Heart left ventricle (tissue), 16 donors: ENCODE measurements at regions of chr15 and their contacts with region 1.

Region 1: GRCh38 chr15:63522225-63522578 is 17.8 kb downstream of the USP3 start:
- DNase-seq: no peak
- ATAC-seq: peak; percentile 9 to 48 (median 32)
- H3K4me3 ChIP-seq: no peak overlapping the region
- H3K27ac ChIP-seq: peak overlapping the region in 1 of 12 donors; percentile 37
- H3K4me1 ChIP-seq: peaks cover 0 to 84% (median 54%) of the 10 kb centered on the region in 12 donors
- H3K27me3 ChIP-seq: no peaks in the 10 kb centered on the region
- CTCF ChIP-seq: no peak
- POLR2A ChIP-seq: no peak

Region 2: DNA sequence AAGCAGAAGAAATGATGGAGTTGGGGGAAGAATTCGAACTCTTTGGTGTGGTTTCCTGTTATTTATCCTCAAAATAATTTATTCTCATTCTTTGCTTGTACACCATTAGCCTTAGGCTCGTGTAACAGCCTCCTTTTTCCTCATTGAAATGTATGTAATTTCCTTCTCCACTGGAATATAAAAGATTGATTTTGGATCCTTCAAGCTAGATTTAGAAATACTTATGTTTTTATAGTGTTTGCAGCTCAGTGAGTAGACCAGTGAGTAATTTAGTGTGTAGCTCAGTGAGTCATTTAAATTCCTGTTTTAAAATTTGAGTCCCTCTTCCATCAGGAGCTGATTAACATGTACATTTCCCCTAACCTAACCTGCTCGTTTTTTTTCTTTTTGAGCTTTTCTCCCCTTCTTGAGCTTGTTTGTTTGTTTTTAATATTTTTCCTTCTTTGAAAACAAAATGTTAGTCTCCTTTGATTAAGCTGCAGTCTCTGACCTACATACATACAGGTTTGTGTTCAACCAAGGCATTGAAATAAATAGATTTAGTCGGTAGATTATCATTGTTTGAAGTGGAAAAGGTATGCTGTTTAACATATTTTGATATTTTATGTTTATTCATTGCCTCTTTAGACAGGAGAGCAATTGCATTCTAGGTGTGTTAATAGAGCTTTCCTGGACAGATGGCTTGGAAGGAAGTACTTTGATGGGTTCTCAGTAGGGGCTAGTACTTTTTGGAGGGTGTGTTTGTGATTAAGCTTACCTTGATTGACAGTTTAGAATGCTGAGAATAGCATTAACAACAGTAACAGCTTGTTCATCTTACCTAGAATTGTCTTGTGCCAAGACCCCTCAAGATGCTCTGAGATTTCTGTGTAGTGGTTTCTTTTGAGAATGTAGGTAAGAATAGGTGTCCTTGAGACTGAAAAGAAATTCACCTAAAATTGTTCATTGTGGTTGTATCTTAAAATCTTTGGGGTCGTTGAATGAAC is 12.0 kb before region 1 on chr15:
- intact Hi-C with region 1: loop called in 1 of 10 experiments (anchors 2 kb)
- DNase-seq: no peak
- ATAC-seq: peak in 1 of 4 donors; percentile 16
- H3K4me3 ChIP-seq: no peak overlapping the region
- H3K27ac ChIP-seq: peak overlapping the region in 2 of 12 donors; percentile 6 to 56
- H3K4me1 ChIP-seq: peaks cover 3 to 93% (median 58%) of the 10 kb centered on the region in 12 donors
- H3K27me3 ChIP-seq: no peaks in the 10 kb centered on the region
- CTCF ChIP-seq: no peak
- POLR2A ChIP-seq: no peak

Region 3: DNA sequence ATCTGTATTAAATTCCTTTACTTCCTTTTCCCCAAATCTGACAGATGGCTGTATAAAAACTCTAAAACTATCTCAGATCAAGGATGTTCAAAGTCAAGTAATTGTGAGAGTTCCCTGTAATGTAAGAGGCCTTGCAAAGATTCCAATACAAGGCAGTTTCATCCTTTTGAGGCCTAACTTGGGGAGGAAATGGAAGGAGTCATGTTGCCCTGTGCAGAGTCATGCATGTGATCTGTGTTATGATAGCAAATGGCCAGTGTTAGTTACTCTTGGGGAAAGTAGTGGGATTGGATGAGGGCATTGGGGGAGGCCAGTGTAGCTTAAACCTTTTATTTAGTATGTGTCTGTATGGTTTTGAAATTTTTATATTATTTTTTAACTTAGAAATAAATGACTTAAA is 51.3 kb after region 1 on chr15:
- intact Hi-C with region 1: loop called in 1 of 10 experiments (anchors 5 kb)
- DNase-seq: no peak
- ATAC-seq: no peak
- H3K4me3 ChIP-seq: no peak overlapping the region
- H3K27ac ChIP-seq: no peak overlapping the region
- H3K4me1 ChIP-seq: peaks cover 0 to 8% (median 0%) of the 10 kb centered on the region in 12 donors
- H3K27me3 ChIP-seq: no peaks in the 10 kb centered on the region
- CTCF ChIP-seq: no peak
- POLR2A ChIP-seq: no peak